WTC11 (cell line): ENCODE measurements at regions of chr5 and their contacts with region 1.

Region 1: DNA sequence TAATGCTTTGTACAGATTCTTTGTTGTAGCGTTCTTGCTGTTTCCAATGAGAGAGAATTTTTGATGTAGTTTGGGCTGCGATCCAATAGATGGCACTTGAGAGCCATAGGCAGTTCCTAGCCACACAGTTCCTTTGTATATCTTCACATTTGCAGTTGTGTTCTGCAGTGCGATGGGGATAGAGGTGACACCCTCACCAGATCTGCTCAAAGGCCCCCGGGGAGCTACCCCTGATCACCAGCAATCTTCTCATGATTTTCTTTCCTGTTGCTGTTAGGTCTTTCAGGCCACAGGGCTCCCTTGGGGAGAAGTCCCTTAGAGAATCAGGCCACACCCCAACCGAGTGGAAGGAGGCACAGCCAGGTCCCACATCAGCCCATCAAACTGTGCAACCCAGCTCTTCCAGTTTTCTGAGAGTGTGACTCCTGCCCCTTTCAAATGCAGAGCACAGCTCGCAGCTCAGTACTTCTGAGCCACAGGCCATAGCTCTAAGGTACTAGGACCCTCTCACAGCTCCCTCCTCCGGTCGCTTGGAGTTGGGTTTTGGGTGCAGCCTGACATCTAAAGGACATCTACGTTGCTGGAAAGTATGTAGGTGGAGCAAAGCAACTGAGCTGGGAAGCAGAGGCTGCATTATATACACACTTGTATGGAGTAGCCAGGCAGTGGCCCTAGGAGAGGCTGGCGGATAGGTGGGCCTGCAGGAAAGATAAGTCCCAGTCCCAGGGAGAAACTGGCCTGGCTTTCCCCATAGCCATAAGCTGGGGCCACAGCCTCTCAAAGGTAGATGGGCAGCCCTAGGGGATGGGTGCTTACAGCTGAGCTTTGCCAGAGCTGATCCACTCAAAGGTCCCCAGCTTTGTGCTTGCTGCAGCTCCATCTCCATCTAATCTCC is 353.5 kb downstream of the SLCO4C1 start:
- DNase-seq: peak; percentile 16
- ATAC-seq: peak; percentile 92
- H3K4me3 Mint-ChIP-seq: peak overlapping the region; percentile 59
- H3K27ac Mint-ChIP-seq: no peak overlapping the region
- H3K4me1 Mint-ChIP-seq: peaks cover 16% of the 10 kb centered on the region
- H3K27me3 Mint-ChIP-seq: peaks cover 3% of the 10 kb centered on the region; the same call in 1 of the 2 replicates
- CTCF ChIP-seq: peak; percentile 27; the same call in 1 of the 2 replicates

Region 2: GRCh38 chr5:101966476-101966875 is 23.9 kb after region 1 on chr5:
- CTCF ChIA-PET with region 1: no interaction called
- POLR2A ChIA-PET with region 1: no interaction called
- DNase-seq: no peak
- ATAC-seq: no peak
- H3K4me3 Mint-ChIP-seq: no peak overlapping the region
- H3K27ac Mint-ChIP-seq: no peak overlapping the region
- H3K4me1 Mint-ChIP-seq: no peaks in the 10 kb centered on the region
- H3K27me3 Mint-ChIP-seq: no peaks in the 10 kb centered on the region; the same call in 1 of the 2 replicates
- CTCF ChIP-seq: no peak

Region 3: GRCh38 chr5:101977729-101978345 is 35.3 kb after region 1 on chr5:
- CTCF ChIA-PET with region 1: interaction called, 27 read pairs
- POLR2A ChIA-PET with region 1: no interaction called
- DNase-seq: no peak
- ATAC-seq: peak; percentile 70
- H3K4me3 Mint-ChIP-seq: no peak overlapping the region
- H3K27ac Mint-ChIP-seq: no peak overlapping the region
- H3K4me1 Mint-ChIP-seq: no peaks in the 10 kb centered on the region
- H3K27me3 Mint-ChIP-seq: no peaks in the 10 kb centered on the region
- CTCF ChIP-seq: peak; percentile 51

Region 4: GRCh38 chr5:102154291-102154690 is 211.7 kb after region 1 on chr5:
- CTCF ChIA-PET with region 1: interaction called, 22 read pairs
- POLR2A ChIA-PET with region 1: no interaction called
- DNase-seq: no peak
- ATAC-seq: no peak
- H3K4me3 Mint-ChIP-seq: peak overlapping the region; percentile 69
- H3K27ac Mint-ChIP-seq: no peak overlapping the region
- H3K4me1 Mint-ChIP-seq: peaks cover 14% of the 10 kb centered on the region
- H3K27me3 Mint-ChIP-seq: peaks cover 21% of the 10 kb centered on the region
- CTCF ChIP-seq: no peak

Region 5: GRCh38 chr5:102296178-102296817 is 353.7 kb after region 1 on chr5 and contains the start of gene SLCO4C1:
- CTCF ChIA-PET with region 1: interaction called, 10 read pairs
- POLR2A ChIA-PET with region 1: no interaction called
- DNase-seq: peak; percentile 98
- ATAC-seq: peak; percentile 96
- H3K4me3 Mint-ChIP-seq: peak within 1 kb of the TSS; percentile 74
- H3K27ac Mint-ChIP-seq: peak within 1 kb of the TSS; percentile 91
- H3K4me1 Mint-ChIP-seq: peaks cover 19% of the 10 kb centered on the region
- H3K27me3 Mint-ChIP-seq: peaks cover 8% of the 10 kb centered on the region; the same call in 1 of the 2 replicates
- CTCF ChIP-seq: peak; percentile 63; the same call in 1 of the 2 replicates
- total RNA-seq, gene SLCO4C1: 5.4 to 6.2 TPM (median 6.0 TPM) in 3 replicates